ENCODE measurements at regions of chr4 and their contacts with region 1.

Region 1: DNA sequence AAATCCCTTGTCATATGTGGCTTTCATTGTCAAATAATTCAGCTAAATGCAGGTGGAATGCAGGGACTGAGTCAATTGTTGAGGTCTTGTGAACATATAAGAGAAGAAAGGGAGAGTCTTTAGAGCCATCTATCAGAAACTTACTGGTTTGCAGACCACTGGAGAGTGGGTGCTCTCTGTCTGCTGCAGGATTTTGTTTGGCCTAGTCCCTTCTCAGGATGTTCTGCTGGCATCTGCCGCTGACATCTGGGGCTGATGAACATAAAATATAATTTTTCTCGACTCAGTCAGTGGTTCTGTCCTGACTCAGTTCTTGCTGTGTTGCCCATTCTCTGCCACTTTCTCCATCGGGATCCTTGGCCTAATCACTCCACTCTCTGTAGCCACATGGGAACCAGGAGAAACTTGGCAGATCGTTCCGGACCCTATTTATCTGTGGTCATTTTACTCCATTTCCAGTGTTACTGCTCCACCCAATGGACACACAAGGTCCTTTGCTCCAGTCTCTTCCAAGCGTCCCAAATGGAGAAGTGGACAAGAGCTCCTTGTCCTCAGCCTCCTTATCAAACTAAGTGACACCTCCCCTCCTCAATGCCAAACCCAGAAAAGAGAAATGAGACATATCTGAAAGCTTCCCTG is 436.2 kb downstream of the FAT4 start:
- DNase-seq: peak; percentile 54
- ATAC-seq: peak; percentile 71
- H3K4me3 ChIP-seq: no peak overlapping the region
- H3K27ac ChIP-seq: no peak overlapping the region
- H3K4me1 ChIP-seq: no peaks in the 10 kb centered on the region
- H3K27me3 ChIP-seq: no peaks in the 10 kb centered on the region
- CTCF ChIP-seq: peak; percentile 48
- POLR2A ChIP-seq: no peak
- RAD21 ChIP-seq: peak; percentile 59

Region 2: GRCh38 chr4:126004941-126005340 is 254.0 kb after region 1 on chr4:
- CTCF ChIA-PET with region 1: no interaction called
- POLR2A ChIA-PET with region 1: no interaction called
- dilution Hi-C with region 1: no loop called
- in situ Hi-C with region 1: no loop called
- intact Hi-C with region 1: no loop called
- DNase-seq: peak; percentile 60
- ATAC-seq: peak; percentile 91
- H3K4me3 ChIP-seq: no peak overlapping the region
- H3K27ac ChIP-seq: no peak overlapping the region
- H3K4me1 ChIP-seq: no peaks in the 10 kb centered on the region; the same call in 1 of the 2 replicates
- H3K27me3 ChIP-seq: no peaks in the 10 kb centered on the region
- CTCF ChIP-seq: no peak
- POLR2A ChIP-seq: no peak
- RAD21 ChIP-seq: no peak

Region 3: DNA sequence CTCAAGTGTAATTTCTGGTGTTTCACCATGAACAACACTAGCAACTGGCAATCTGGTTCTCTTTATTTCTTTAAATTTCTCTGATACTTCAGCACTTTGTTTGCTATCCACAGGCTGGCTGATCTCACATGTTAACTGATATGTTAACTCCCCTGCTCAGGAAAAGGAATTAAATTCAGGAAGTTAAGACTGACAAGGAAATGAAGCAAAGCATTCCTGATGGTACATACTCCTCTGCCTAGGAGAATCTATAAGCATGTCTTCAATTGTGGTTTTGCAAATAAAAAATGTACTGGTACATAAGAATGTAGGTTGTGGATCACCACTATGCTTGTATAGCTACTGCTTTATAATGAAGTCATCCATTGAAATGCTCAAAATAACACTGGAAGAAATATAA is 762.6 kb after region 1 on chr4:
- CTCF ChIA-PET with region 1: no interaction called
- POLR2A ChIA-PET with region 1: no interaction called
- dilution Hi-C with region 1: no loop called
- in situ Hi-C with region 1: no loop called
- intact Hi-C with region 1: no loop called
- DNase-seq: no peak
- ATAC-seq: no peak
- H3K4me3 ChIP-seq: no peak overlapping the region
- H3K27ac ChIP-seq: no peak overlapping the region
- H3K4me1 ChIP-seq: no peaks in the 10 kb centered on the region
- H3K27me3 ChIP-seq: no peaks in the 10 kb centered on the region
- CTCF ChIP-seq: no peak
- POLR2A ChIP-seq: no peak
- RAD21 ChIP-seq: no peak

Region 4: GRCh38 chr4:127379499-127379898 is 1628.6 kb after region 1 on chr4:
- CTCF ChIA-PET with region 1: no interaction called
- POLR2A ChIA-PET with region 1: no interaction called
- dilution Hi-C with region 1: no loop called
- in situ Hi-C with region 1: loop called (anchors 25 kb)
- intact Hi-C with region 1: no loop called
- DNase-seq: no peak
- ATAC-seq: no peak
- H3K4me3 ChIP-seq: no peak overlapping the region
- H3K27ac ChIP-seq: no peak overlapping the region
- H3K4me1 ChIP-seq: no peaks in the 10 kb centered on the region
- H3K27me3 ChIP-seq: no peaks in the 10 kb centered on the region
- CTCF ChIP-seq: no peak
- POLR2A ChIP-seq: no peak
- RAD21 ChIP-seq: no peak

Measured in IMR-90 (cell line).